Esophagus muscularis mucosa (tissue), 4 donors: ENCODE measurements at regions of chr17 and their contacts with region 1.

Region 1: GRCh38 chr17:49729069-49729468 is 21.3 kb upstream of the SLC35B1 start:
- DNase-seq: no peak
- H3K4me3 ChIP-seq: no peak overlapping the region
- H3K27ac ChIP-seq: peak overlapping the region; percentile 80 to 84 (median 82)
- H3K4me1 ChIP-seq: peaks cover 58 to 84% (median 82%) of the 10 kb centered on the region in 4 donors
- H3K27me3 ChIP-seq: no peaks in the 10 kb centered on the region
- CTCF ChIP-seq: no peak
- EP300 ChIP-seq: no peak
- POLR2A ChIP-seq: no peak

Region 2: DNA sequence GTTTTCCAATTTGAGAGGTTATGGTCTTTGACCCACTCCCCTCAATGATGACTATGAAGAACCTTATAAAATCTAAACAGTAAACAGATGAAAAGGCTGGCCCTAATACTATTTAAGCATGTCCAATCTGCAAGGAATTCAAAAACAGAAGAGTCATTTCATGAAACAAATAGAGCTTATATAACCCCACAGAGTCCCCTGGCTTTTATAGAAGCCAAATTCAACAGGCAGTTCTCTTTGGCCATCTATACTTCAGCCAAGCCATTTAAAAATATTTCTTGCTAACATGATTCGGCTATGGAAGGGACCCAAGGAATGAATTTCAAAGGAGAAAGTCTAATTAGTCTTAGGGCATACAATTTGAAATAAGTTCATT is 94.6 kb before region 1 on chr17:
- intact Hi-C with region 1: no loop called
- DNase-seq: no peak
- H3K4me3 ChIP-seq: no peak overlapping the region
- H3K27ac ChIP-seq: peak overlapping the region; percentile 57 to 93 (median 76)
- H3K4me1 ChIP-seq: peaks cover 69 to 100% (median 97%) of the 10 kb centered on the region in 4 donors
- H3K27me3 ChIP-seq: no peaks in the 10 kb centered on the region
- CTCF ChIP-seq: no peak
- EP300 ChIP-seq: no peak
- POLR2A ChIP-seq: no peak

Region 3: DNA sequence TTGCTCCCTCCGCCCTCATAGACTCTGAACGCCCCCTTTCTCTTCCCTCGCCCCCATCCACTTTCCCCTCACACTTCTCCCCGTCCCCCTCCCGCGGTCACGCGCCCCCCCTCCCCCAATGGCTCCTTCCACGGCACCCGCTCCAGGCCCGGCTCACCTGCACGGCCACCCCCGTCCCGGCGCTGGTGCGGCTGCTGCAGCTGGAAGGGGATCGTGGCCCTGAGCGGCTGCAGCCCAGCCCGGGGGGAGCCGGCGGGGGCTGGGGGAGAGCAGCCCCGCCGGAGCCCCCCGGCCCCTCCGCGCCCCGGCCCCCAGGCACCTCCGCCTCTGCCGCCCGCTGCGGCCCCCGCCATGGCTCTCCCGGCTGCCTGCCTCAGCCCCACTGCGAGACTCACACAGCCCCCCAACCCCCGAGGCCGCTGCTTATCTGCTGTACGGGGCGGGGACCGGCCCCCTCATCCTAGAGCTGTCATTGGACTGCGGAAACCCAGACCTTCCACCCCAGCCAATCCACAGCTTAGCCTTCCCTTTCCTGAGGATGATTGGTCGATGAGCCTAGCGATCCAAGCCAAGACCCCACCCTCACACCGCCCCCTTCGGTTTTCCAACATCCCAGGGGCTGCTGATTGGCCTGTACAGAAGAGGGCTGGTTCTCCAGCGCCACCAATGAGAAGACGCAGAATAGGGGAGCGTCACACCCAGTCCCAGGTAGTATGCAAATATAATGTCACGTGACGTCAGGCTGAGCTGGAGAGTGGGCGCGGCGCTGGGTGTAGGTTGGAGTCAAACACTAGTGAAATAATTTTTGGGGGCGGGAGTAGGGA is 34.9 kb after region 1 on chr17 and contains the start of gene FAM117A:
- intact Hi-C with region 1: loop called (anchors 5 kb)
- DNase-seq: peak; percentile 99
- H3K4me3 ChIP-seq: peak within 1 kb of the TSS; percentile 87 to 93 (median 90)
- H3K27ac ChIP-seq: peak within 1 kb of the TSS; percentile 84 to 90 (median 88)
- H3K4me1 ChIP-seq: peaks cover 10 to 56% (median 45%) of the 10 kb centered on the region in 4 donors
- H3K27me3 ChIP-seq: no peaks in the 10 kb centered on the region
- CTCF ChIP-seq: no peak
- EP300 ChIP-seq: no peak
- POLR2A ChIP-seq: no peak
- total RNA-seq, gene FAM117A: 13.3 to 33.0 (median 24.8) TPM